Activated CD4-positive, alpha-beta memory T cell treated with anti-CD3 and anti-CD28 coated beads for 36 hours (primary cell): ENCODE measurements at regions of chr4 and their contacts with region 1.

Region 1: GRCh38 chr4:22688236-22688635 is 4.5 kb upstream of the GBA3 start:
- DNase-seq: no peak
- H3K4me3 Mint-ChIP-seq: no peak overlapping the region
- H3K27ac Mint-ChIP-seq: no peak overlapping the region
- H3K4me1 Mint-ChIP-seq: no peaks in the 10 kb centered on the region
- H3K27me3 Mint-ChIP-seq: no peaks in the 10 kb centered on the region

Region 2: DNA sequence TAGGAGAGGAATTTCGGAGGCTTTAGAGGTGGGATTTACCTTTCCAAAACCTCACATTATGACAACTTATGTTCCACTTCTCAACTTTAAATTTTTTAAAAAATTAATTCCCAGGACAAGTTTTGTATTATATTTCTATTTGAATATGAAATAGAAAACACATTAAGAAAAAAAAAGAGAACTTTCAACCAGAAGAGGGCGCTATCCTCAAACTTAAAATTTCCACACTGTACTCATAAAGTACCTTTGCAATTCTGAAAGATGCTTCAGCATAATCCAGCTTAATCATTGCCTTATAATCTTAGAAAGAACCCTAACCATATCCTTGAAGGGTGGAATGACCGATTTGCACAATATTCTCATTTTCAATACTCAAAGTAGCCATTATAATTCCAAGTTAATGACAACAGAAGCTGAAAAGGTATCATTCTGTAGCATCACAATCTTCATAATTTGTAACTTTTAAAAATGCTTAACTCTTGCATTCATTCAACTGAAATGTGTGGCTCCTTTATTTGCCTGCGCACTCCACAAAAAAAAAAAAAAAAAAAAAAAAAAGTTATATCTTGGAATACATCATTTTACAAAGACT is 897.7 kb before region 1 on chr4:
- CTCF ChIA-PET with region 1: interaction called, 3 read pairs
- POLR2A ChIA-PET with region 1: no interaction called
- intact Hi-C with region 1: loop called (anchors 2 kb)
- DNase-seq: no peak
- H3K4me3 Mint-ChIP-seq: no peak overlapping the region
- H3K27ac Mint-ChIP-seq: no peak overlapping the region
- H3K4me1 Mint-ChIP-seq: no peaks in the 10 kb centered on the region
- H3K27me3 Mint-ChIP-seq: no peaks in the 10 kb centered on the region

Region 3: GRCh38 chr4:22410645-22411247 is 277.5 kb before region 1 on chr4:
- CTCF ChIA-PET with region 1: interaction called, 3 read pairs
- POLR2A ChIA-PET with region 1: no interaction called
- intact Hi-C with region 1: loop called (anchors 1 kb)
- DNase-seq: no peak
- H3K4me3 Mint-ChIP-seq: no peak overlapping the region
- H3K27ac Mint-ChIP-seq: no peak overlapping the region
- H3K4me1 Mint-ChIP-seq: no peaks in the 10 kb centered on the region
- H3K27me3 Mint-ChIP-seq: no peaks in the 10 kb centered on the region